ENCODE measurements at regions of chr10 and their contacts with region 1.

Region 1: GRCh38 chr10:92517034-92517655 is 56.7 kb downstream of the IDE start:
- DNase-seq: no peak
- ATAC-seq: peak; percentile 92
- H3K4me3 ChIP-seq: no peak overlapping the region
- H3K27ac ChIP-seq: no peak overlapping the region
- H3K4me1 ChIP-seq: no peaks in the 10 kb centered on the region
- H3K27me3 ChIP-seq: no peaks in the 10 kb centered on the region
- CTCF ChIP-seq: peak; percentile 83

Region 2: GRCh38 chr10:92381543-92381954 is 135.6 kb before region 1 on chr10:
- intact Hi-C with region 1: no loop called
- DNase-seq: no peak
- ATAC-seq: no peak
- H3K4me3 ChIP-seq: no peak overlapping the region
- H3K27ac ChIP-seq: no peak overlapping the region
- H3K4me1 ChIP-seq: no peaks in the 10 kb centered on the region
- H3K27me3 ChIP-seq: no peaks in the 10 kb centered on the region
- CTCF ChIP-seq: no peak

Region 3: GRCh38 chr10:92450896-92451295 is 66.2 kb before region 1 on chr10:
- intact Hi-C with region 1: no loop called
- DNase-seq: no peak
- ATAC-seq: no peak
- H3K4me3 ChIP-seq: no peak overlapping the region
- H3K27ac ChIP-seq: no peak overlapping the region
- H3K4me1 ChIP-seq: no peaks in the 10 kb centered on the region
- H3K27me3 ChIP-seq: no peaks in the 10 kb centered on the region
- CTCF ChIP-seq: no peak

Region 4: GRCh38 chr10:92573798-92574547 is 56.8 kb after region 1 on chr10 and contains the start of gene IDE:
- intact Hi-C with region 1: loop called (anchors 10 kb)
- DNase-seq: peak; percentile 95
- ATAC-seq: peak; percentile 95
- H3K4me3 ChIP-seq: peak within 1 kb of the TSS; percentile 96
- H3K27ac ChIP-seq: peak within 1 kb of the TSS; percentile 91
- H3K4me1 ChIP-seq: peaks cover 20% of the 10 kb centered on the region
- H3K27me3 ChIP-seq: no peaks in the 10 kb centered on the region
- CTCF ChIP-seq: peak; percentile 79
- total RNA-seq, gene IDE: 35.2 TPM

Region 5: GRCh38 chr10:93062514-93063143 is 545.5 kb after region 1 on chr10:
- intact Hi-C with region 1: no loop called
- DNase-seq: peak; percentile 64
- ATAC-seq: peak; percentile 72
- H3K4me3 ChIP-seq: peak overlapping the region; percentile 23
- H3K27ac ChIP-seq: no peak overlapping the region
- H3K4me1 ChIP-seq: peaks cover 15% of the 10 kb centered on the region
- H3K27me3 ChIP-seq: peaks cover 65% of the 10 kb centered on the region
- CTCF ChIP-seq: peak; percentile 40

Measured in upper lobe of right lung (tissue), 1 donor.